ENCODE measurements at regions of chr6 and their contacts with region 1.

Region 1: DNA sequence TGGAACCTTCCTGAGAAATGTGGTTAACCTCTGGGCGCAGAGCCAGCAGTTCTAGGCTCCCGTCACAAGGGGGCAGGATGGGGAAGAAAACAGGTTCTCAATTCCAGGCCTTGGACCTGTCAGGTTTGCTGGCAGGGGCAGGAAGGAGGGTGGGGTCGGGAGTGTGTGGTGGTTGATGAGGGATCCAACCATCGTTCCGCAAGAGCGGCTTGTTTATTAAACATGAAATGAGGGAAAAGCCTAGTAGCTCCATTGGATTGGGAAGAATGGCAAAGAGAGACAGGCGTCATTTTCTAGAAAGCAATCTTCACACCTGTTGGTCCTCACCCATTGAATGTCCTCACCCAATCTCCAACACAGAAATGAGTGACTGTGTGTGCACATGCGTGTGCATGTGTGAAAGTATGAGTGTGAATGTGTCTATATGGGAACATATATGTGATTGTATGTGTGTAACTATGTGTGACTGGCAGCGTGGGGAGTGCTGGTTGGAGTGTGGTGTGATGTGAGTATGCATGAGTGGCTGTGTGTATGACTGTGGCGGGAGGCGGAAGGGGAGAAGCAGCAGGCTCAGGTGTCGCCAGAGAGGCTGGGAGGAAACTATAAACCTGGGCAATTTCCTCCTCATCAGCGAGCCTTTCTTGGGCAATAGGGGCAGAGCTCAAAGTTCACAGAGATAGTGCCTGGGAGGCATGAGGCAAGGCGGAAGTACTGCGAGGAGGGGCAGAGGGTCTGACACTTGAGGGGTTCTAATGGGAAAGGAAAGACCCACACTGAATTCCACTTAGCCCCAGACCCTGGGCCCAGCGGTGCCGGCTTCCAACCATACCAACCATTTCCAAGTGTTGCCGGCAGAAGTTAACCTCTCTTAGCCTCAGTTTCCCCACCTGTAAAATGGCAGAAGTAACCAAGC is 29.6 kb downstream of the SRSF3 start:
- DNase-seq: peak; percentile 89
- ATAC-seq: peak; percentile 86
- H3K4me3 ChIP-seq: no peak overlapping the region
- H3K27ac ChIP-seq: no peak overlapping the region
- H3K4me1 ChIP-seq: peaks cover 37% of the 10 kb centered on the region
- H3K27me3 ChIP-seq: no peaks in the 10 kb centered on the region
- CTCF ChIP-seq: peak; percentile 86

Region 2: DNA sequence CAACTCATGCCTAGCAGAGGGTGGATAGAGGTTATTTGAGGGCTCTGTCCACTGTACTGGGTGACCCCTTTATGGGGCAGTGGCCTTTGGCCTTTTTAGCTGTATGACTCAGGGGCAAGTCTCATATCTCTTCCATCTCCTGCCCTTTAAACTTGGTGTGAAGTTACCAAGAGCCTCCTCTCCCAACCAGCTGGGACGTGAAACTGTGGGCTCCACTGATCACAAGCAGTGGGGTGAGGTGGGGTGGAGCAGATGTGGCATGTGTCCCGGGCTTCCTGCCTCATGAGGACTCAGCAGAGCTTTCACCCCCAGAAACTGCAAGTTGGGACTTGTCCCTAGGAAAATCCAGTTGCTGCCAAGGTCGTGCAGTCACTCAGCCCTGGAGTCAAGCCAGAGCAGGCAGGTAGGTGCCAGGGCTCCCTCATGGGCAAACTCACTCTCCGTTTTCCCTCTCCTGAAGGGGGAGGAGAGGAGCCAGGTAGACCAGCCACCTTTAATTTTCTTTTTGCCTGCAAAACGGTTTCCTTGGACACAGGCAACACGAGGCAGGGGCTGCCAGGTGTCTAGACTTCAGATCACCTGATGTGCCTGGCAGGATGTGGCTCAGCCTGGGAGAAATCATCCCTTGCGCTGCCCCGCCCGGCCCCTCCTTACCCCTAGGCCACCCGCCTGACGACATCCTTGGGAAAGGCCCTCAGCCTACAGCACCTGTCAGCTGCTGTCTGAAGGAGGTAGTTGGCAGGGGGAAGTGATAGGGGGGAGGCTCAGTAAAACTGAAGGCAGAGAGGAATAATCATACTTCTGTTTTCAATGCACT is 58.7 kb after region 1 on chr6:
- intact Hi-C with region 1: loop called (anchors 5 kb)
- DNase-seq: peak; percentile 79
- ATAC-seq: peak; percentile 2
- H3K4me3 ChIP-seq: peak overlapping the region; percentile 9
- H3K27ac ChIP-seq: peak overlapping the region; percentile 2
- H3K4me1 ChIP-seq: peaks cover 53% of the 10 kb centered on the region
- H3K27me3 ChIP-seq: no peaks in the 10 kb centered on the region
- CTCF ChIP-seq: no peak

Region 3: DNA sequence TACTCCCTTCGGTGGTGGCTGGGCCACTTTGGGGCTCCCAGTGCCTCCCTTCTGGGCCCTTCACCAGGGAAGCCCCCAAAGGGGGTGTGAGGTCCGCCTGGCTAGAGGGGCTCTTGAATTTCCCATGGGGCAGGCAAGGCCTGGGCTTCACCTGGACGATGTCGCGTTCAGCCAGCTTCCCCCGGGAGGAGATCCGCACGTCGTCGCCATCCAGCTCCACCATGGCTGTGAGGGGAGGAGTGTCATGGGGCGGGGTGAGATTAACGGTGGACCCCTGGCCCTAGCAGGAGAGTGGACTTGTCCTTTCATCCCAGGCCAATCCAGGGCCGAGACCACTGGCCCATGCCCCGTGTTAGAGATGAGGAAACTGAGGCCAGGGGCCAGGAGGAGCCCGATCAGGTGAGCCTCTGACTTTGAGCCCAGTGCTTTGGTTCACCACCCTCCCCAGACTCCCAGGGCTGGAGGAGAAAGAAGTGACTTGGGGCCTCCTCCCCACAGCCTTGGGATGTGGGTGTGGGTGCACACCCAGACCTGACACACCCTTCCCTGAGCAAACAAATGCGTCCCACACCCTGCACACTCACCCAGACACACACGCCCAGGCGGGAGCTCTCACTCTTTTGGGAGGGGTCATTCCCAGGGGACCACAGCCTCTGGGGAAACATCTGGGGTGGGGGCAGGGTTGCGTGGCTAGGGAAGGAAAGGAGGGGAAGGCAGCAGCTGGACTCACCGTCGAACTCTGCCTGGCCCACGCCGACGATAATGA is 119.9 kb after region 1 on chr6:
- intact Hi-C with region 1: loop called (anchors 10 kb)
- DNase-seq: no peak
- ATAC-seq: no peak
- H3K4me3 ChIP-seq: no peak overlapping the region
- H3K27ac ChIP-seq: no peak overlapping the region
- H3K4me1 ChIP-seq: no peaks in the 10 kb centered on the region
- H3K27me3 ChIP-seq: no peaks in the 10 kb centered on the region
- CTCF ChIP-seq: no peak